Pancreas (tissue), 10 donors: ENCODE measurements at regions of chr1 and their contacts with region 1.

Region 1: GRCh38 chr1:220786337-220787068 is at the start of gene MTARC1:
- DNase-seq: peak; percentile 77 to 90 (median 86)
- ATAC-seq: peak; percentile 76 to 88 (median 86)
- H3K4me3 ChIP-seq: peak within 1 kb of the TSS; percentile 49 to 73 (median 56)
- H3K27ac ChIP-seq: peak within 1 kb of the TSS; percentile 67 to 82 (median 78)
- H3K4me1 ChIP-seq: peaks cover 0 to 4% (median 0%) of the 10 kb centered on the region in 3 donors
- H3K27me3 ChIP-seq: no peaks in the 10 kb centered on the region
- CTCF ChIP-seq: no peak
- total RNA-seq, gene MTARC1: 2.5 to 10.8 (median 7.4) TPM

Region 2: GRCh38 chr1:220315070-220315839 is 471.2 kb before region 1 on chr1:
- intact Hi-C with region 1: loop called in 1 of 3 experiments (anchors 10 kb)
- DNase-seq: no peak
- ATAC-seq: no peak
- H3K4me3 ChIP-seq: no peak overlapping the region
- H3K27ac ChIP-seq: no peak overlapping the region
- H3K4me1 ChIP-seq: no peaks in the 10 kb centered on the region
- H3K27me3 ChIP-seq: no peaks in the 10 kb centered on the region
- CTCF ChIP-seq: no peak